ENCODE measurements at regions of chr20 and their contacts with region 1.

Region 1: GRCh38 chr20:54757725-54758686 is 282.6 kb downstream of the DOK5 start:
- DNase-seq: no peak
- H3K4me3 ChIP-seq: no peak overlapping the region
- CTCF ChIP-seq: no peak
- POLR2A ChIP-seq: no peak

Region 2: GRCh38 chr20:54780960-54781359 is 23.0 kb after region 1 on chr20:
- intact Hi-C with region 1: loop called (anchors 1 kb)
- DNase-seq: no peak
- H3K4me3 ChIP-seq: no peak overlapping the region
- CTCF ChIP-seq: no peak
- POLR2A ChIP-seq: no peak

Region 3: GRCh38 chr20:55386686-55387085 is 628.7 kb after region 1 on chr20:
- intact Hi-C with region 1: no loop called
- DNase-seq: no peak
- H3K4me3 ChIP-seq: no peak overlapping the region
- CTCF ChIP-seq: no peak
- POLR2A ChIP-seq: no peak

Measured in lower leg skin (tissue), 4 donors.